ENCODE measurements at regions of chr10 and their contacts with region 1.

Region 1: GRCh38 chr10:26790221-26790995 is 70.3 kb downstream of the ABI1 start:
- DNase-seq: no peak

Region 2: GRCh38 chr10:26341701-26342100 is 448.7 kb before region 1 on chr10:
- intact Hi-C with region 1: loop called in 1 of 2 experiments (anchors 5 kb)
- DNase-seq: no peak

Region 3: DNA sequence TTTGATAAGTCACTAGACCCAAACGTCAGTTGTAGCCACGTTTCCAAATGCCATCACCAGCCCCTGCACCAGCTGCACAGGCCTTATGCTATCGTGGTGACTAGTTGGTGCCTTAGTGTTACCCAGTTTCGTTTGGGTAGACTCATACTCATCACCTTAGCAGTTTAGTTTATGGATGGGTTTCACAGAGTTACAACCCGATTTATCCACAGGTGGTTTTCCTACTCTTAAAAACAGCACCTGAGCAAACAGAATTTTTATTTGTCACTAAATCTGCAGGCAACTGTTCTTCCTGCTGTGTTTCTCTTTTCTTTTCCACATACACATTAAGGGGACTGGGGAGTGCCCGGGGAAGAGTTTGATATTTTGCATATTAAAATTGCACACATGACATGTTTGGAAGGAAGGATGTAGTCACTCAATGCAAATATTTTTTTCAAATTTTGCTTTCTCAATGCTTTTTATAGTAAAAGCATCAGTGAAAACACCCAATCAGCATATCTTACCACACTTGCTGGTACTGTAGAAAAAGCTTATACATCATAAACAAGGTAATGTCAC is 51.3 kb before region 1 on chr10:
- intact Hi-C with region 1: no loop called
- DNase-seq: no peak

Region 4: DNA sequence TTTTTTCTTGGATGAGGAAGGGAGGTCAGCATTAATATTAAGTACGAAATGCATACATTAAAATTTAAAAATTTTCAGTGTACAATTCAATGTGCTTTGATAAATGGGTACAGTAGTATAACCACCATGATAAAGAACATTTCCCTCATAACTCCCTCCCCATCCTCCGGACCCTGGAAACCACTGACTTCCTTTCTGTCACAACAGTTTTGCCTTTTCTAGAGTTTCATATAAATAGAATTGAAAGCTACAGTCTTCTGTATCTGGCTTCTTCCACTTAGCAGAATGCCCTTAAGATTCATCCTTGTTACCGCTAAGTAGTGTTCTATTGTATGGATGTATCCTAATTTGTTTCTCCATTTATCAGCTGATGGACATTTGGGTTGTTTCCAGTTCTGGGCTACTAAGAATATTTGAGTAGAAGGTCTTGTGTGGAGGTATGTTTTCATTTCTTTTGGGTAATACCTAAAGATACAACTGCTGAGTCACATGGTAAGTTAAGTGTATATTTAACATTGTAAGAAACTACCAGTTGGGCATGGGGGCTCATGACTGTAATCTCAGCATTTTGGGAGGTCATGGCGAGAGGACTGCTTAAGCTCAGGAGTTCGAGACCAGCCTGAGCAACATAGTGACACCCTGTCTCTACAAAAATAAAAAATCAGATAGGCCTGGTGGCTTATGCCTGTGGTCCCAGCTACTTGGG is 39.6 kb after region 1 on chr10:
- intact Hi-C with region 1: no loop called
- DNase-seq: no peak